Activated CD4-positive, alpha-beta T cell treated with anti-CD3 and anti-CD28 coated beads, Interleukin-2, amount 10 ng/mL, durations not matched to agents 7 days and 5 days (primary cell): ENCODE measurements at regions of chr4 and their contacts with region 1.

Region 1: GRCh38 chr4:142282870-142283431 is 563.1 kb downstream of the INPP4B start:
- DNase-seq: peak; percentile 40
- H3K4me3 Mint-ChIP-seq: no peak overlapping the region
- H3K27ac Mint-ChIP-seq: no peak overlapping the region
- H3K4me1 Mint-ChIP-seq: peaks cover 8% of the 10 kb centered on the region
- H3K27me3 Mint-ChIP-seq: no peaks in the 10 kb centered on the region

Region 2: GRCh38 chr4:142272452-142272851 is 10.5 kb before region 1 on chr4:
- CTCF ChIA-PET with region 1: interaction called, 15 read pairs
- POLR2A ChIA-PET with region 1: no interaction called
- DNase-seq: no peak
- H3K4me3 Mint-ChIP-seq: no peak overlapping the region
- H3K27ac Mint-ChIP-seq: no peak overlapping the region
- H3K4me1 Mint-ChIP-seq: peaks cover 30% of the 10 kb centered on the region
- H3K27me3 Mint-ChIP-seq: no peaks in the 10 kb centered on the region